Lower leg skin (tissue), 4 donors: ENCODE measurements at regions of chrX and their contacts with region 1.

Region 1: GRCh38 chrX:109714340-109714958 is 18.6 kb downstream of the ACSL4 start:
- DNase-seq: no peak
- H3K4me3 ChIP-seq: no peak overlapping the region
- CTCF ChIP-seq: no peak
- POLR2A ChIP-seq: no peak

Region 2: GRCh38 chrX:109856974-109857373 is 142.5 kb after region 1 on chrX:
- intact Hi-C with region 1: loop called (anchors 10 kb)
- DNase-seq: no peak
- H3K4me3 ChIP-seq: no peak overlapping the region
- CTCF ChIP-seq: no peak
- POLR2A ChIP-seq: no peak